PC-3 (cell line): ENCODE measurements at regions of chr4 and their contacts with region 1.

Region 1: DNA sequence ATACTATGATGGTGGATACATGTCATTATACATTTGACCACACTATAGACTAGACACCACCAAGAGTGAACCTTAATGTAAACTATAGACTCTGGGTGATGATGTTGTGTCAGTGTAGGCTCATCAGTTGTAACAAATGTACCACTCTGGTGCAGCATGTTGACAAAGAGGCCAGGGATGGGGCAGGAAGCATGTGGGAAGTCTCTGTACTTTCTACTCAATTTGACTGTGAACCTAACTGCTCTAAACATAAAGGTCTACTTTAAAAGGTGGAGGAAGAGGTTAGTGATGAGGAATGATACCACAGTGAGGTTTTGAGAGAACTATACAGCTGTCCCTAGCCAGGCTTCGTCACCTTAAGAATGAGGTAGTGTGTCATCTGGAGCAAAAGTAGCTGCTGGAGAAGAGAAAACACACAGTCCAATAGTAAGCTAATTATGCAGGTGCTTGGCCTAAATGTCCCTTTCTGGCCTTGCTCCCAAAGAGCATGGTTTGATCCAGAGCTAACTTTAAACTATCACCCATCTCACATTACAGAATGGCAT is 38.4 kb downstream of the GRSF1 start:
- DNase-seq: no peak
- ATAC-seq: no peak
- H3K4me3 ChIP-seq: no peak overlapping the region
- H3K27ac ChIP-seq: no peak overlapping the region
- H3K4me1 ChIP-seq: peaks cover 13% of the 10 kb centered on the region
- H3K27me3 ChIP-seq: no peaks in the 10 kb centered on the region
- CTCF ChIP-seq: no peak

Region 2: GRCh38 chr4:70863099-70863790 is 61.9 kb after region 1 on chr4:
- CTCF ChIA-PET with region 1: no interaction called
- POLR2A ChIA-PET with region 1: interaction called, 15 read pairs
- intact Hi-C with region 1: no loop called
- DNase-seq: no peak
- ATAC-seq: no peak
- H3K4me3 ChIP-seq: no peak overlapping the region
- H3K27ac ChIP-seq: no peak overlapping the region
- H3K4me1 ChIP-seq: peaks cover 9% of the 10 kb centered on the region
- H3K27me3 ChIP-seq: no peaks in the 10 kb centered on the region
- CTCF ChIP-seq: no peak

Region 3: DNA sequence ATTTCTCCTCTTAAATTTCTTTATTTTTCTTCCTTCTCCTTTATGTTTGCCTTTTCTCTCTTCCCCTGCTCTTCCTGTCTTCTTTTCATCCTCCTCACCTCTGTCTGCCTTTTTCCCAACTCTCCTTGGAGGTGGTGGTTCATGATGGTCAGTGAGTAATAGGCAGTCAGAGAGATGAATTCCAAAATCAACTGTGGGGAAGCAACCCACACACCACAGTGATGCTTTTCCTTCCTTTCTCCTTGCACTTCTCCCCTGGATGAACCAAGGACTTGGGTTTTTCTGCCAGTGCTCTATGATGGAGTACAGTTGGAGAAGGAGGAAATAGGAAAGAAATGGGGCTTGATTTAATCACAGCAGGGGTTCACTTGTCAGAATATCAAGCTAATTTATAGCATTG is 345.9 kb after region 1 on chr4:
- CTCF ChIA-PET with region 1: no interaction called
- POLR2A ChIA-PET with region 1: no interaction called
- intact Hi-C with region 1: no loop called
- DNase-seq: peak; percentile 26
- ATAC-seq: no peak
- H3K4me3 ChIP-seq: no peak overlapping the region
- H3K27ac ChIP-seq: no peak overlapping the region
- H3K4me1 ChIP-seq: peaks cover 14% of the 10 kb centered on the region
- H3K27me3 ChIP-seq: no peaks in the 10 kb centered on the region
- CTCF ChIP-seq: no peak